Right ventricle myocardium inferior (tissue), 1 donor: ENCODE measurements at regions of chr3 and their contacts with region 1.

Region 1: GRCh38 chr3:66816090-66816761 is 181.9 kb upstream of the KBTBD8 start:
- DNase-seq: no peak
- ATAC-seq: peak; percentile 75

Region 2: GRCh38 chr3:66253790-66254620 is 562.2 kb before region 1 on chr3:
- intact Hi-C with region 1: loop called (anchors 2 kb)
- DNase-seq: no peak
- ATAC-seq: no peak

Region 3: GRCh38 chr3:66276705-66277274 is 539.4 kb before region 1 on chr3:
- intact Hi-C with region 1: loop called (anchors 1 kb)
- DNase-seq: no peak
- ATAC-seq: no peak

Region 4: GRCh38 chr3:66856533-66856932 is 40.3 kb after region 1 on chr3:
- intact Hi-C with region 1: no loop called
- DNase-seq: no peak
- ATAC-seq: no peak